Activated CD4-positive, alpha-beta memory T cell treated with anti-CD3 and anti-CD28 coated beads for 36 hours (primary cell): ENCODE measurements at regions of chr3 and their contacts with region 1.

Region 1: GRCh38 chr3:14402304-14402811 is at the start of gene SLC6A6:
- DNase-seq: peak; percentile 95
- H3K4me3 Mint-ChIP-seq: peak within 1 kb of the TSS; percentile 99
- H3K27ac Mint-ChIP-seq: peak within 1 kb of the TSS; percentile 97
- H3K4me1 Mint-ChIP-seq: peaks cover 34% of the 10 kb centered on the region
- H3K27me3 Mint-ChIP-seq: no peaks in the 10 kb centered on the region
- total RNA-seq, gene SLC6A6: 44.0 to 45.1 TPM

Region 2: DNA sequence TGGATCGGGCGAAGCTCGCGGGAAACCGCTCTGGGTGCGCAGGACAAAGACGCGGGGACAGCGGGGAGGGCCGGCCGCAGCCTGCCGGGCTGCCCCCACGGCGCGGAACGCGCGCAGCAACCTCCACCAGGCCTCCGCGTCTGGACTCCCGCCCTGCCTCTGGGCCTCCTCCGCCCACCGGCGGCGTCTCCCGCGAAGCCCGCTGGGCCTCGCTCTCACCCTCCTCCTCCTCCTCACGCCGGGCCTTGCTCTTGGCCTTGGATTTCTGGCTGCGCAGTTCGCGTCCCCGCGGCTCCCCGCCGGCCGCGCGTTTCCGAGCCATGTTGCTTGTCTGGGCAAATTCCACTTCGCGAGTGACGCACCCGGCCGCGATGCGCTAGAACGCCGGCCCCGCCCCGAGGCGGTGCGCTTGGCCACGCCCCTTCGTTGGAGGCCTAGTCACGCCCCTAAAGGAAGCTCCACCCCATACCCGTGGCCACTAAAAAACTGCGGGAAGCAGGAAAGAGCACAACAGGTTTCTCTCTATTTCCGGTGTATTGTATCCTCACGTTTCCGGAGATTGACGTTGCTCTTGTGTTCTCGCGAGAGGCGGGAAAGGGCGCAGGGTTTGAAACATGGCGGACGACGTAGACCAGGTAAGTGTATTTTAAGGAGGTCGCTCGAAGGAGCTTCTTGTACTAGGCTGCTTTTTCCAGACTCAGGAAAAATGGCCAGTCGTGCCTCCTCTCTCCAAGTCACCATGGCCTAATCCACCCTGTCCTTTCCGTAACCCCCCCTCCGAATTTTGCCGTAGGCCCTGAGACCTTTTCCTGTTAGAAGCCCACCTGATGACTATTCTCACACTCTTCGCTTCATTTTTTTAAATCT is 223.9 kb before region 1 on chr3 and contains the starts of genes LSM3 and XPC:
- CTCF ChIA-PET with region 1: interaction called, 5 read pairs
- POLR2A ChIA-PET with region 1: interaction called, 8 read pairs
- intact Hi-C with region 1: loop called (anchors 2 kb)
- DNase-seq: peak; percentile 98
- H3K4me3 Mint-ChIP-seq: peak within 1 kb of the TSS; percentile 87
- H3K27ac Mint-ChIP-seq: peak within 1 kb of the TSS; percentile 89
- H3K4me1 Mint-ChIP-seq: peaks cover 63% of the 10 kb centered on the region
- H3K27me3 Mint-ChIP-seq: no peaks in the 10 kb centered on the region
- total RNA-seq, gene LSM3: 22.1 to 22.9 TPM
- total RNA-seq, gene XPC: 27.8 to 31.6 TPM

Region 3: DNA sequence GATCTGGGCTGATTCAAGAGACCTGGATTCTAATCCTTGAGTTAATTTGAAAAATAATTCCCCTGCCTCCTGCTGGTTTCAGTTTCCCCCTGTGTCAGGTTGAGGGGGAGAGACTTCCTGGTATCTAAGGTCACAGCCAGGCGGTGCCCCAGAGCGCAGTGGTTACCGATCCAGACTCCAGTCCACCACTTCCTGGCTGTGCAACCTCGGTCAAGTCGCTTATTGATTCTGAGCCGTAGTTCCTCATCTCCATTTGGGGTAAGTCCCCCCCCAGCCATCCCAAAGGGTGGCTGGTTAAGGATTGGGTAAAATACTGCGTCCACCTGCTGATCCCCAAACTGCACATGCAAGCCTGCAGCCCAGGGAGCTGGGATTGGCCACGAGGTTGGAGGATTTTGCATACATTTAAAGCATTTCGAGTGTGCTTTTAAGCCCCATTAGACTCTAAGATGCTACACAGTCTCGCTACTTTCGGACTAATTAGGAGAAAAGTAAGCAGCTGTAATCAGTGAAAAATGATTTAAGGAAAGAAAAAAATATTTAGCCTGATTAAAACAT is 23.8 kb after region 1 on chr3:
- CTCF ChIA-PET with region 1: interaction called, 16 read pairs
- POLR2A ChIA-PET with region 1: interaction called, 50 read pairs
- intact Hi-C with region 1: no loop called
- DNase-seq: peak; percentile 73
- H3K4me3 Mint-ChIP-seq: peak overlapping the region; percentile 43
- H3K27ac Mint-ChIP-seq: peak overlapping the region; percentile 85
- H3K4me1 Mint-ChIP-seq: peaks cover 87% of the 10 kb centered on the region
- H3K27me3 Mint-ChIP-seq: no peaks in the 10 kb centered on the region

Region 4: GRCh38 chr3:14461748-14462324 is 59.5 kb after region 1 on chr3:
- CTCF ChIA-PET with region 1: interaction called, 21 read pairs
- POLR2A ChIA-PET with region 1: interaction called, 13 read pairs
- intact Hi-C with region 1: loop called (anchors 1 kb)
- DNase-seq: peak; percentile 58
- H3K4me3 Mint-ChIP-seq: no peak overlapping the region
- H3K27ac Mint-ChIP-seq: peak overlapping the region; percentile 65
- H3K4me1 Mint-ChIP-seq: peaks cover 35% of the 10 kb centered on the region
- H3K27me3 Mint-ChIP-seq: no peaks in the 10 kb centered on the region

Region 5: GRCh38 chr3:14651440-14652251 is 249.3 kb after region 1 on chr3 and contains the start of gene CCDC174:
- CTCF ChIA-PET with region 1: no interaction called
- POLR2A ChIA-PET with region 1: no interaction called
- intact Hi-C with region 1: loop called (anchors 1 kb)
- DNase-seq: peak; percentile 97
- H3K4me3 Mint-ChIP-seq: peak within 1 kb of the TSS; percentile 89
- H3K27ac Mint-ChIP-seq: peak within 1 kb of the TSS; percentile 98
- H3K4me1 Mint-ChIP-seq: peaks cover 35% of the 10 kb centered on the region
- H3K27me3 Mint-ChIP-seq: no peaks in the 10 kb centered on the region
- total RNA-seq, gene CCDC174: 16.6 to 18.6 TPM